ENCODE measurements at regions of chr1 and their contacts with region 1.

Region 1: GRCh38 chr1:162056043-162056442 is 13.4 kb upstream of the NOS1AP start:
- DNase-seq: peak; percentile 17 to 36
- ATAC-seq: peak; percentile 80 to 84
- H3K4me3 ChIP-seq: no peak overlapping the region
- H3K27ac ChIP-seq: no peak overlapping the region
- H3K4me1 ChIP-seq: no peaks in the 10 kb centered on the region
- H3K27me3 ChIP-seq: no peaks in the 10 kb centered on the region
- CTCF ChIP-seq: peak; percentile 65 to 90 (median 81)
- POLR2A ChIP-seq: no peak

Region 2: GRCh38 chr1:162003826-162004208 is 52.2 kb before region 1 on chr1:
- in situ Hi-C with region 1: no loop called
- intact Hi-C with region 1: no loop called
- DNase-seq: peak in 1 of 2 donors; percentile 38
- ATAC-seq: peak; percentile 50 to 55
- H3K4me3 ChIP-seq: peak overlapping the region; percentile 17 to 33 (median 26)
- H3K27ac ChIP-seq: peak overlapping the region; percentile 61 to 72 (median 65)
- H3K4me1 ChIP-seq: peaks cover 12 to 14% of the 10 kb centered on the region in 2 donors
- H3K27me3 ChIP-seq: peaks cover 0 to 2% (median 0%) of the 10 kb centered on the region in 3 donors
- CTCF ChIP-seq: no peak
- POLR2A ChIP-seq: peak in 1 of 2 donors; percentile 21

Region 3: GRCh38 chr1:162276493-162276892 is 220.4 kb after region 1 on chr1:
- in situ Hi-C with region 1: no loop called
- intact Hi-C with region 1: loop called (anchors 1 kb)
- DNase-seq: no peak
- ATAC-seq: no peak
- H3K4me3 ChIP-seq: no peak overlapping the region
- H3K27ac ChIP-seq: no peak overlapping the region
- H3K4me1 ChIP-seq: no peaks in the 10 kb centered on the region
- H3K27me3 ChIP-seq: no peaks in the 10 kb centered on the region
- CTCF ChIP-seq: no peak
- POLR2A ChIP-seq: no peak

Region 4: DNA sequence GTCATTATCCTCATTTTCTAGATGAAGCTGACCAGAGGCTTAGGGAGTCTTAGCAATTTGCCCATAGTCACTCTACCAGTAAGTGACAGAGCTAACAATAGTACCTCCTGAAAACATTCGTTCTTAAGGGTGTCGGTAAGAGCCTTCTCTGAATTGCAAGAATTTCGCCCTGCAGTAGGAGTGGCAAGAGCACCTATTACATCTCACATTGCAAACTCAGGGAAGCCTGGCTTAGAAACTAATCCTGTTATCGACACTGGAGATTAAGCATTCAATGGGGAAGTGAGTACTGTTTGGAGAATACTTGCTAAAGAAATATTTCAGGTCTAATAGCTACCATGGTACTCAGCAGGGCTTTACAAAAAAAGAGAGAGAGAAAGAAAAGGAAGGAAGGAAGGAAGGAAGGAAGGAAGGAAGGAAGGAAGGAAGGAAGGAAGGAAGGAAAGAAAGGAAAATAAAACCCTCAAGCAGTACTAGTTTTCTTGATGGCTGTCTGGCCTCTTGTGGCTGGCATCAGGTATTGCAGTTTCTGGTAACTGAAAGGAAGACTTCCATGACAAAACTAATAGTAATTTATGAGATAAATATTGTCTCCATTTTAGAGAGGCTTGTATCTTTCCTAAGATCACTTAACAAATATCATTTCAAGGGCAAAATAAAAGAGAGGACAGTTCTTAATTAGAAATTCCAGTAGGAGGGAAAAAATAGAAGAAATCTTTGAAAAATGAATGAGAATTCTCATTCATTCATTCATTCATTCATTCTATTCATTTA is 335.9 kb after region 1 on chr1:
- in situ Hi-C with region 1: loop called in 3 of 4 experiments (anchors 5 to 10 kb)
- intact Hi-C with region 1: loop called (anchors 2 kb)
- DNase-seq: no peak
- ATAC-seq: no peak
- H3K4me3 ChIP-seq: no peak overlapping the region
- H3K27ac ChIP-seq: no peak overlapping the region
- H3K4me1 ChIP-seq: no peaks in the 10 kb centered on the region
- H3K27me3 ChIP-seq: peaks cover 0 to 6% (median 0%) of the 10 kb centered on the region in 3 donors
- CTCF ChIP-seq: peak; percentile 45 to 70 (median 52)
- POLR2A ChIP-seq: no peak